HCT116 (cell line): ENCODE measurements at regions of chr7 and their contacts with region 1.

Region 1: GRCh38 chr7:142587578-142588191 is 161.6 kb upstream of the PRSS1 start:
- DNase-seq: peak; percentile 82
- ATAC-seq: peak; percentile 96
- H3K4me3 ChIP-seq: no peak overlapping the region
- H3K27ac ChIP-seq: 0 out of 2 replicates have a peak overlapping the region, but pooled peaks have one; percentile 9
- H3K4me1 ChIP-seq: peaks cover 0 to 23% of the 10 kb centered on the region in 2 experiments; a peak in 3 of 4 replicates
- H3K27me3 ChIP-seq: no peaks in the 10 kb centered on the region
- CTCF ChIP-seq: peak; percentile 86 to 99 (median 89)
- POLR2A ChIP-seq: no peak
- RAD21 ChIP-seq: peak; percentile 56

Region 2: GRCh38 chr7:141210862-141211261 is 1376.8 kb before region 1 on chr7:
- CTCF ChIA-PET with region 1: no interaction called
- POLR2A ChIA-PET with region 1: no interaction called
- RAD21 ChIA-PET with region 1: no interaction called
- intact Hi-C with region 1: no loop called
- DNase-seq: no peak
- ATAC-seq: no peak
- H3K4me3 ChIP-seq: no peak overlapping the region
- H3K27ac ChIP-seq: no peak overlapping the region
- H3K4me1 ChIP-seq: no peaks in the 10 kb centered on the region
- H3K27me3 ChIP-seq: peaks cover 54% of the 10 kb centered on the region
- CTCF ChIP-seq: no peak
- POLR2A ChIP-seq: no peak
- RAD21 ChIP-seq: no peak

Region 3: GRCh38 chr7:142345811-142346210 is 241.9 kb before region 1 on chr7:
- CTCF ChIA-PET with region 1: no interaction called
- POLR2A ChIA-PET with region 1: no interaction called
- RAD21 ChIA-PET with region 1: no interaction called
- intact Hi-C with region 1: no loop called
- DNase-seq: no peak
- ATAC-seq: no peak
- H3K4me3 ChIP-seq: no peak overlapping the region
- H3K27ac ChIP-seq: no peak overlapping the region
- H3K4me1 ChIP-seq: no peaks in the 10 kb centered on the region
- H3K27me3 ChIP-seq: no peaks in the 10 kb centered on the region
- CTCF ChIP-seq: no peak
- POLR2A ChIP-seq: no peak
- RAD21 ChIP-seq: no peak

Region 4: GRCh38 chr7:142557971-142558582 is 29.6 kb before region 1 on chr7:
- CTCF ChIA-PET with region 1: interaction called, 38 read pairs
- POLR2A ChIA-PET with region 1: interaction called, 4 read pairs
- RAD21 ChIA-PET with region 1: interaction called, 3 read pairs
- intact Hi-C with region 1: loop called (anchors 1 kb)
- DNase-seq: peak; percentile 51
- ATAC-seq: peak; percentile 84
- H3K4me3 ChIP-seq: no peak overlapping the region
- H3K27ac ChIP-seq: no peak overlapping the region
- H3K4me1 ChIP-seq: peaks cover 14 to 35% of the 10 kb centered on the region in 2 experiments
- H3K27me3 ChIP-seq: no peaks in the 10 kb centered on the region
- CTCF ChIP-seq: peak; percentile 83 to 96 (median 91)
- POLR2A ChIP-seq: no peak
- RAD21 ChIP-seq: peak; percentile 59

Region 5: GRCh38 chr7:142568435-142569097 is 19.1 kb before region 1 on chr7:
- CTCF ChIA-PET with region 1: interaction called, 11 read pairs
- POLR2A ChIA-PET with region 1: no interaction called
- RAD21 ChIA-PET with region 1: no interaction called
- intact Hi-C with region 1: no loop called
- DNase-seq: no peak
- ATAC-seq: peak; percentile 91
- H3K4me3 ChIP-seq: peak overlapping the region in 1 of 2 experiments; percentile 17; a peak in 2 of 4 replicates
- H3K27ac ChIP-seq: no peak overlapping the region
- H3K4me1 ChIP-seq: peaks cover 5 to 17% of the 10 kb centered on the region in 2 experiments
- H3K27me3 ChIP-seq: no peaks in the 10 kb centered on the region
- CTCF ChIP-seq: no peak
- POLR2A ChIP-seq: no peak
- RAD21 ChIP-seq: no peak

Region 6: GRCh38 chr7:142598297-142598696 is 10.6 kb after region 1 on chr7:
- CTCF ChIA-PET with region 1: interaction called, 25 read pairs
- POLR2A ChIA-PET with region 1: no interaction called
- RAD21 ChIA-PET with region 1: interaction called in 1 of 2 experiments, 3 read pairs
- intact Hi-C with region 1: no loop called
- DNase-seq: no peak
- ATAC-seq: no peak
- H3K4me3 ChIP-seq: no peak overlapping the region
- H3K27ac ChIP-seq: no peak overlapping the region
- H3K4me1 ChIP-seq: no peaks in the 10 kb centered on the region
- H3K27me3 ChIP-seq: peaks cover 3% of the 10 kb centered on the region; the same call in 1 of the 2 replicates
- CTCF ChIP-seq: no peak
- POLR2A ChIP-seq: no peak
- RAD21 ChIP-seq: no peak

Region 7: GRCh38 chr7:142603870-142604448 is 16.3 kb after region 1 on chr7:
- CTCF ChIA-PET with region 1: interaction called, 25 read pairs
- POLR2A ChIA-PET with region 1: no interaction called
- RAD21 ChIA-PET with region 1: interaction called in 1 of 2 experiments, 3 read pairs
- intact Hi-C with region 1: no loop called
- DNase-seq: peak; percentile 53
- ATAC-seq: peak; percentile 81
- H3K4me3 ChIP-seq: no peak overlapping the region; a peak in 2 of 4 replicates
- H3K27ac ChIP-seq: no peak overlapping the region
- H3K4me1 ChIP-seq: peaks cover 0 to 7% of the 10 kb centered on the region in 2 experiments; a peak in 1 of 4 replicates
- H3K27me3 ChIP-seq: no peaks in the 10 kb centered on the region
- CTCF ChIP-seq: peak; percentile 78 to 92 (median 90)
- POLR2A ChIP-seq: no peak
- RAD21 ChIP-seq: peak; percentile 86